IMR-90 (cell line): ENCODE measurements at regions of chr7 and their contacts with region 1.

Region 1: GRCh38 chr7:46569133-46569465 is 648.0 kb upstream of the IGFBP3 start:
- DNase-seq: no peak
- ATAC-seq: no peak
- H3K4me3 ChIP-seq: no peak overlapping the region
- H3K27ac ChIP-seq: no peak overlapping the region
- H3K4me1 ChIP-seq: peaks cover 5% of the 10 kb centered on the region
- H3K27me3 ChIP-seq: no peaks in the 10 kb centered on the region
- CTCF ChIP-seq: no peak
- POLR2A ChIP-seq: no peak
- RAD21 ChIP-seq: no peak

Region 2: DNA sequence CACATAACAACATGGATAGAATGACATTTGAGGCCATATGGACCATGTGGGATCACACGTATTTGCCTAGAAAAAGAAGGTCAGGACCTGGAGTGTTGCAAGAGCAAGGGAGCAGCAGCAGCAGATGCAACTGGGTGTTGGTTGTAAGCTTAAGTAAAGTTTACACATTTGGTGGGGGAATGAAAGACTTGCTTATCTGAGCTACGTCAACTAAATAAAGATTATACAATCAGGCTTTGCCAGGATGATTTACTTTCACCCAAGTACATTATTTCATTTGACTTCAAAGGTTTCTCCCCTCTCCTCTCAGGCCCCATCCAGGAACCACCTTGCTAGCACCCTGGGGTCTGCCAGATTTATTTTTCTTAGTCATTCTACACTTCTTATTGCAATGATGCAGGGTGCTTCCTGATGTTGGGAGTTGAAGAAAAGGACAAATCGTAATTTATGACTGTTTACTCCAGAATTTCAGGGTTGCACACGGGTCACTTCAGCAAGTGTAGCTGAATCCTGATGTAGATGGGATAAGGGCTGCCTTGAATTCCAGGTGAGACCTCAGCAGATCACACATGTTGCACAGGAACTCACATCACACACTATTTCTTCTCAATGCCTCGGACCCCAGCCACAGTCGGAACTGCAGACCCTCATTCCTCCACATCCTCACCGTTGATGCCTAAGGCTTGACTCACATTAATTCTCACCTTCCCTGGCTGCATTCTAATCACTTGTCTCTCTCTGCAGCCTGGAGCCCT is 56.0 kb before region 1 on chr7:
- CTCF ChIA-PET with region 1: no interaction called
- POLR2A ChIA-PET with region 1: no interaction called
- dilution Hi-C with region 1: no loop called
- in situ Hi-C with region 1: no loop called
- intact Hi-C with region 1: no loop called
- DNase-seq: peak; percentile 75
- ATAC-seq: peak; percentile 67
- H3K4me3 ChIP-seq: no peak overlapping the region
- H3K27ac ChIP-seq: peak overlapping the region; percentile 52; the same call in 1 of the 2 replicates
- H3K4me1 ChIP-seq: peaks cover 5% of the 10 kb centered on the region; the same call in 1 of the 2 replicates
- H3K27me3 ChIP-seq: no peaks in the 10 kb centered on the region
- CTCF ChIP-seq: no peak
- POLR2A ChIP-seq: no peak
- RAD21 ChIP-seq: no peak

Region 3: GRCh38 chr7:46776790-46777189 is 207.7 kb after region 1 on chr7:
- CTCF ChIA-PET with region 1: no interaction called
- POLR2A ChIA-PET with region 1: no interaction called
- dilution Hi-C with region 1: no loop called
- in situ Hi-C with region 1: no loop called
- intact Hi-C with region 1: loop called (anchors 10 kb)
- DNase-seq: peak; percentile 36
- ATAC-seq: no peak
- H3K4me3 ChIP-seq: no peak overlapping the region
- H3K27ac ChIP-seq: no peak overlapping the region
- H3K4me1 ChIP-seq: no peaks in the 10 kb centered on the region
- H3K27me3 ChIP-seq: no peaks in the 10 kb centered on the region
- CTCF ChIP-seq: peak; percentile 55
- POLR2A ChIP-seq: no peak
- RAD21 ChIP-seq: peak; percentile 67